ENCODE measurements at regions of chr5 and their contacts with region 1.

Region 1: GRCh38 chr5:62354028-62354874 is 48.2 kb downstream of the KIF2A start:
- DNase-seq: peak in 2 of 5 donors; percentile 42 to 47
- H3K4me3 ChIP-seq: no peak overlapping the region
- H3K4me3 Mint-ChIP-seq: no peak overlapping the region
- H3K27ac ChIP-seq: no peak overlapping the region
- H3K27ac Mint-ChIP-seq: peak overlapping the region in 6 of 8 donors; percentile 0 to 81 (median 60)
- H3K4me1 ChIP-seq: no peaks in the 10 kb centered on the region
- H3K4me1 Mint-ChIP-seq: peaks cover 9 to 23% (median 13%) of the 10 kb centered on the region in 3 donors
- H3K27me3 ChIP-seq: no peaks in the 10 kb centered on the region
- H3K27me3 Mint-ChIP-seq: no peaks in the 10 kb centered on the region

Region 2: DNA sequence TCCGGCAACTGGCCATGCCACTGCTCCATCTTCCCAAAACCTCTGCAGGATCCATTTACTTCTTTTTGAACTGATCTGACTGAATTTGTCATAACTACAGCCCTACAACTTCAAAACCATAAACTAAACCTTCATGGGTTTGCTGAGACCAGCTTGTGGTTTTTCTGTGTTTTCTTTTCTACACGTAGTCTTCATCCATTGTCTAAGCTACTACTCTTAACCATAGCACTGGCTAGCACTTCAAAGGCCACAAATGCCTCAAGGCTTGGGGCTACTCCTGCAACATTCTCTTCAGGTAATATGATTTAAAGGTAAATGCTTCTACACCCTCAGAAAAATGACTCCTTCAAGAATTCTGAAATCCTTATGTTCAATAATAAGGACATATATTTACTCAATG is 57.2 kb before region 1 on chr5:
- CTCF ChIA-PET with region 1: interaction called, 33 read pairs
- POLR2A ChIA-PET with region 1: no interaction called
- DNase-seq: peak in 1 of 5 donors; percentile 44
- H3K4me3 ChIP-seq: no peak overlapping the region
- H3K4me3 Mint-ChIP-seq: peak overlapping the region; percentile 34 to 85 (median 70)
- H3K27ac ChIP-seq: no peak overlapping the region
- H3K27ac Mint-ChIP-seq: peak overlapping the region in 7 of 8 donors; percentile 46 to 80 (median 63)
- H3K4me1 ChIP-seq: peaks cover 55% of the 10 kb centered on the region
- H3K4me1 Mint-ChIP-seq: peaks cover 58 to 82% (median 75%) of the 10 kb centered on the region in 3 donors
- H3K27me3 ChIP-seq: no peaks in the 10 kb centered on the region
- H3K27me3 Mint-ChIP-seq: no peaks in the 10 kb centered on the region

Region 3: GRCh38 chr5:62578540-62578939 is 224.3 kb after region 1 on chr5 and contains the start of gene LRRC70:
- CTCF ChIA-PET with region 1: no interaction called
- POLR2A ChIA-PET with region 1: no interaction called
- DNase-seq: peak in 2 of 5 donors; percentile 78 to 81
- H3K4me3 ChIP-seq: no peak within 1 kb of the TSS
- H3K4me3 Mint-ChIP-seq: peak within 1 kb of the TSS; percentile 33 to 72 (median 61)
- H3K27ac ChIP-seq: no peak within 1 kb of the TSS
- H3K27ac Mint-ChIP-seq: peak within 1 kb of the TSS; percentile 57 to 91 (median 85)
- H3K4me1 ChIP-seq: peaks cover 5% of the 10 kb centered on the region
- H3K4me1 Mint-ChIP-seq: peaks cover 16 to 40% (median 22%) of the 10 kb centered on the region in 3 donors
- H3K27me3 ChIP-seq: no peaks in the 10 kb centered on the region
- H3K27me3 Mint-ChIP-seq: no peaks in the 10 kb centered on the region
- total RNA-seq, gene LRRC70: 0.13 to 0.60 TPM